Right ventricle myocardium inferior (tissue), 1 donor: ENCODE measurements at regions of chr5 and their contacts with region 1.

Region 1: DNA sequence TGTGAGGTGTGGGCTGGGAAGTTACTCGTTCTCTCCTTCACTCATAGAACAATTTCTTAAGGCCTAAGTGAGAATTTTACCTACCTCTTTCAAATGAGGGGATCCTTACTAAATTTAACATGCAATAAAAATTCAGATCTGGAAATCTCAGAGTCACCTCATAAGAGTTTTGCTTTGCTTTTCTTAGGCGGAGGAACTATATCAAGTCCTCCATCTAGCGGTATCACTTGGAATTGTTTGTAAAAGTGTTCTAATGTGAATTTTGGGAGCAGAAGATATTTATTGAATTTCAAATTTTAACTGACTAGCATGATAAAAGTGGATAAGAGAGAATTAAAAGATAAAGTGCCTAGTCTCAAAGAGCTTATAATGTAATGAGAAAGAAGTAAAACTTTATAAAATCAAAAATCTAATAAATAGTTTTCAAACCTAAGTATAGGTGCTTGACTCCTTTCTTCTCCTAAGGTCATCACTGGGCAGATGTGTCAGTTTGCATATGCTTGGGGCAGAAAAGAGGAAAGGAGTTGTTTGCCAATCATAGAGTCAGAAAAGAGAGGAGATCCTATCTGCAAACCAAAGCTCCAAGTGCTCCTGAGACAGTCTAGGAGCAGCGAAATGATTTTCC is 145.7 kb upstream of the DAB2 start:
- DNase-seq: no peak
- ATAC-seq: no peak

Region 2: DNA sequence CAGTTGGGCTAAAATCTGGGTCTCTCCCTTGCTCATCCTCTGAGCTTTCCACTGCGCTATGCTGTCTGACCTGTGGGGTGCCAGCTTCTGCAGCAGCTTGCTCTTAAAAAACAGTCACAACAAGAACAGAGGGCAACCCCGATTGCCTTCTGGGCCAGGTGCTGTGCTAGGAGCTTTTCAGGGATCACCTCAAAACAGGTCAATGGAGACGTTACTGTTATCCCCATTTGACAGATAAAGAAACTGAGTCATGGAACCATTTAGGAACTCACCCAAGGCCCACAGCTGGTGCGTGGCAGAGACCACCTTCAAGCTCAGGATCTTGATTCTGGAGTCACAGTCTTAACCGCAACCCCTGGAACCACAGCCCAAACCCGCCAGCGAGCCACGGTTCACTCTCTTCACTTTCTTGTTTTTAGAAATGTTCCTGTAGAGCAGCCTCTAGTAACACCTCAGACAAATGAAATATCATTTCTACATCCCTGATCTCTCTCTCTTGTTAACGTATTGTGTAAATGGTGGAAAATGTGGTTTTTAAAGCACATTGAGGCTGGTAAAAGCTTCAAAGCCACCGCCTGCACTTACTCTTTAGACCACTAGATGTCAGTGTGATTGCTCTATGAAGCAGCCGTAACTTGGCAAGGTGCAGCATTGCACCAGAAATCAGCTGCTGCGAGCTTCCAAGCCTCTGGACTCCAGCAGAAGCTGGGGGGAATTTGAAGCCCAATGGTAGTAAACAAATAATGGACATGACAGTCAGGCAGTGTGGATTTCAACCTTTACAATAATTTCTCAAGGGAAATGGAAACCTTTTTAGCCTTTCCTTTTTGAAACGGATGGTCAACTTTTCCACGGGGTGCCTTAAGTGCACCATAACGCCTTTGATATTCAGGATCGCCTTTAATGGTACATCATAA is 352.9 kb before region 1 on chr5:
- intact Hi-C with region 1: loop called (anchors 2 kb)
- DNase-seq: peak; percentile 82
- ATAC-seq: peak; percentile 74

Region 3: DNA sequence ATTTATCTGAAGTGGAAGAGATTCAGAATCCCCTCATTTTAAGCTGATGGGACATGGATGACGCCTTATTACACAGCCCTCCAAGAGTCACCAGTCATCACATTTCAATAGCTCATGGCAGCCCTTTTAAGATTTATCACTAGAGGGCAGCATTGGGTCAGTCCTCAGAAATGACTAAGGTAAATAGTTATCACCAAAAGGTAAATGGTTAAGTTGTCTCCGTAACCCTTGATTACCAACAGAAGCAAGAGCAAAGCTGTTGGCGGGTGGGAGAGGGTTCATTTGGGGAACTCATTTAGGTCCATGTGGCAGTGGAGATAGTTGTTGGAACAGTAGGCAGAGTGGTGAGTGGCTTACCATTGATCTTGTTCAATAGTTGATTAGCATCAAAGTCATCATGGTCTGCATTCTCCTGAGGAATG is 194.2 kb before region 1 on chr5:
- intact Hi-C with region 1: loop called (anchors 2 kb)
- DNase-seq: no peak
- ATAC-seq: peak; percentile 38